Right cardiac atrium (tissue), 5 donors: ENCODE measurements at regions of chr2 and their contacts with region 1.

Region 1: DNA sequence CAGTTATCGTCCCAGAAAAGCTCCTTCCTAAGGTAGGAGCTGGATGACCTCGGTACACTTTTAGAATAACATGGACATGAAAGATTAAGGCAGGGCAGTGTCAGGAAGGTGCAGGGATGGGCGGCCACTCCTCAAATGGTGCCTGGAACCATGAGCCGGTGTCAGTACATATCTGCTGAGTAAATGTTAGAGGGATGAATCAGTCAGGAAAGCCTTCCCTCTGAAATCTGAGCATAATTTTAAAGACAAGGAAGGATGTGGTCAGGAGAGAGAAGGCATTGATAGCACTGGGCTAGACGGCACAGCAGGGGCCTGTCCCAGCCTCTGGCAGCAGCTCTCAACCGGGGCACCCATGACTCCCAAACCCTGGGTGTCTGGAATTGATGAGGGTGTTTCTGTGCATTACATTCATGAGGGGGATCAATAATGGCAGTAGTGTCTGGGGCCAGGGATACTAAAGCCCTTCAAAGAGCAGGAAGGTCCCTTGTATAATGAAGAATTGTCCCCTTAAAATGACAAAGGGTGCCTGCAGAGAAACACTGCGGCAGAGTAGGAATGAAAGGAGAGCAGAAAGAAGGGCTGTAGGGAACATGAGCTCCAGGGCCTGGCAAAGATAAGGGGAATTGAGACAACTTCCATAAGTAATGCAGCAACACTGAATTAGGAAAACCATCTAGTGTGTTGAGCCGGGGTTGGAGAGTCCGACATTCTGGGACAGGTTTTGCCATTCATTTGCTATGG is 162.3 kb upstream of the REV1 start:
- DNase-seq: no peak
- ATAC-seq: peak in 1 of 2 donors; percentile 34
- H3K4me3 ChIP-seq: no peak overlapping the region
- H3K27ac ChIP-seq: no peak overlapping the region
- H3K4me1 ChIP-seq: no peaks in the 10 kb centered on the region
- H3K27me3 ChIP-seq: no peaks in the 10 kb centered on the region

Region 2: DNA sequence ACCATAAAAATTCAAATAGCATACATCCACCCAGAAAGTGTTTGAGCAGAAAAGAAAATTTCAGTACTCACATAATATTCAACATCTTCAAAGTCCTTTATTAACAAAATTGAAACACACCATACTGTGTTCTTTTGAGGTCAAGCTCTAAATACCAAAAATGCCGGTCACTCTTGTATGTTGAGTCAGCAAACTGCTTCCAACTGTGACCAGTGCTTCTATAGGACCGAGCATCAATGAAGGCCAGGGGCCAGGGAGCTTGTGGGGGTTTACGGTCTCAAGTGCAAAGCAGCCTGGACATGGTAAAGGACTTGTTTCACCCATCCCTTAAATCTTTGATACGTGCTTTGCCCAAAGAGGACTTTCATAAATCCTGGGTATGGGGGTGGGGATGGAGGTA is 49.6 kb before region 1 on chr2:
- intact Hi-C with region 1: loop called in 1 of 4 experiments (anchors 10 kb)
- DNase-seq: no peak
- ATAC-seq: no peak
- H3K4me3 ChIP-seq: no peak overlapping the region
- H3K27ac ChIP-seq: no peak overlapping the region
- H3K4me1 ChIP-seq: peaks cover 5% of the 10 kb centered on the region
- H3K27me3 ChIP-seq: no peaks in the 10 kb centered on the region